Colonic mucosa (tissue), 4 donors: ENCODE measurements at regions of chr15 and their contacts with region 1.

Region 1: DNA sequence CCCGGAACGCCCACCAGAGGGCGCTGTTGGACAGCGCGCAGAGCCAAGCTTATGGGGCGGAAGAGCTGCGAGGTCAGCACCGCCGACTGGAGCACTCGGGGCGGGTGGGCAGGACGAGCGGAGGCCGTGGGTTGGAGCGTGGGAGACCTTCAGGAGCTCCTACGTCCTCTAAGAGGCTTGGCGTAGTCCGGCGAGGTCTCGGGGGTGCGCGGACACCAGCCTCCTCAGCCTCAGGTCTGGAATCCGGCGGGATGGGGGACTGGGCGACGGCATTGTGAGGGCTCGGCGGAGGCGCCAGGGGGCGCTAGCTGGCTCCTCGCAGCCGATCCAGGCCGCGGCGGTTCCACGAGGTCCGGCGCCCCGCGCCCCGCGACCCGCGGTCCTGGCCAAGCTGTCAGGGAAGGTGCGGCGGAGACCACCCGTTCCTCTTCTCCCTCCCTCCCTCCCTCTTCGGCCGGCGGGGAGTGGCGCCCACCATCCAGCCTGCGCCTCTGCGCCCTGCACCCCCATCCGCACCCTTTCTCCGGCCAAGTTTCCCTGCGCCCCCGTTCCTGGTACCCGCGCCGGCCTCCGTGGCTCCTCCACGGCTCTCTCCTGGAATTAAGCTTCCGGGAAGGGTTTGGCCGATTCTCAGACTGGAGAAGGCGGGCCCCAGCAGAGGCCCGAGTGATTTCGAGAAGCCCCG is 24.3 kb upstream of the POLG start:
- DNase-seq: peak; percentile 71
- H3K4me3 ChIP-seq: peak overlapping the region; percentile 29
- H3K27ac ChIP-seq: no peak overlapping the region
- H3K4me1 ChIP-seq: peaks cover 9% of the 10 kb centered on the region
- H3K27me3 ChIP-seq: peaks cover 56% of the 10 kb centered on the region
- CTCF ChIP-seq: peak; percentile 94

Region 2: DNA sequence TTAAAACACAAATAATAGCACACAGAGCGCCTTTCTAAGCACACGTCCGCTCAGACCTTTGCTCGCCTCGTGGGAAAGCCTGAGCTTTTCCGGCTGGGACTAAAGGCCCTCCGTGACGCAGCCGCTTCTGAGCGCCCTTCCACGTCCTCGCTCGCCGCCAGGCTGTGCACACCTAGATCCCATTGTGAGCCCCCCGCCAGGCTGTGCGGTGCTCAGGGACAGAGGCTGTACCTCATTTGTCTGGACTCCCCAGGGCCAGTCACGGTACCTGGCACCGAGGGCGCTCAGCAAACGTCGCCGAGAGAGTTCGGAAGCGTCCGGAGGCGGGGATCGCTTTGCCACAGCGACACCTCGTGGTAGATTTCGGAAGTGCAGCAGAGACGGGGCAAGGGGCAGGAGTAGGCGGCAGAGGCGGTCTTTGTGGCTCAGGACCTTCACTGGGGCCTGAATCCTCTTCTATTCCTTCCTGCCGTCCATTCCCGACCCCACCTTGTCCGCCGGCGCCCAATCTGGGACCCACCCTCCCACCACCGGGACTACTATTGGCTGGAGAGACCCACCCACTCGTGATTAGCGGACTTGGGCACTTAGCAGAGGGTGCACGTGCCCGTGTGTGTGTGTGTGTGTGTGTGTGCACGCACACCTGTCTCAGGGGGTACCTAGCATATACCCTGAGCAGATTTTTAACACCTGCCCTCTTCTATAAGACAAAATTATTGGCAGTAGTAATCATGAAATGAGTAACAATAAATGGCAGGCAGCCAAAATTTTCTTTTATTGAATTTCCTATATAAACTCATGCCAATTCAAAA is 71.8 kb after region 1 on chr15:
- intact Hi-C with region 1: loop called (anchors 2 kb)
- DNase-seq: peak; percentile 94
- H3K4me3 ChIP-seq: peak overlapping the region; percentile 39
- H3K27ac ChIP-seq: no peak overlapping the region
- H3K4me1 ChIP-seq: peaks cover 3% of the 10 kb centered on the region
- H3K27me3 ChIP-seq: no peaks in the 10 kb centered on the region
- CTCF ChIP-seq: peak; percentile 97

Region 3: DNA sequence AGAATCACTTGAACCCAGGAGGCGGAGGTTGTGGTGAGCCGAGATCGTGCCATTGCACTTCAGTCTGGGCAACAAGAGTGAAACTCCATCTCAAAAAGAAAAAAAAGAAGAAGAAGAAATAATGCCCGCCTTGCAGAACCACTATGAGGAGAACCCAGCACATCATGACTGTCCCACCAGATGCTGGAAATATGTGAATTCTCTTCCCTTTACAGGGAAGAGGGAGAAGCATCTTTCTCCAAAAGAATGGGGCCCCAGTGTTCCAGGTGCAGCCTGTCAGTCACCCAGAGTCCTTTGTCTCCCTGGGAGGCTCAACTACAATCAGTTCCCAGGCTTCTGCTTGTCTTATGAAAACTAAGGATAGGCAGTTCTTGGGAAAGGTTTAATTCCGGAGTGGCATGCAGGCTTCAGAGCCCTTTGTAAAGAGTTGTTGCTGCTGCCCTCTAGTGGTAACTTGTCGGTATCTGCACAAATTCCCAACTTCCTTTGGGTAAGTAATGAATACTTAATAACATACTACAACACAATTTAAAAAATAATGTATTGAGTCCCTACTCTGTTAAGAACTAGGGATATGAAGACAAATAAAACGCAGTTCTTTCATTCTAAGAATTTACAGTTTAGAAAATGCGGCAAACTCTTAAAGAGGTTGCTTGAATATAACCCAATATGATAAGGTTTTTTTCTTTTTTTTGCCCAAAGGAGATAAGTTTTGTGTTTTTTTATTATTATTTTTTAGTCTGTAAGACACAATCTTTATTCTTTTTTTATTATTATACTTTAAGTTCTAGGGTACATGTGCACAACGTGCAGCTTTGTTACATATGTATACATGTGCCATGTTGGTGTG is 197.7 kb after region 1 on chr15:
- intact Hi-C with region 1: loop called (anchors 10 kb)
- DNase-seq: peak; percentile 63
- H3K4me3 ChIP-seq: no peak overlapping the region
- H3K27ac ChIP-seq: no peak overlapping the region
- H3K4me1 ChIP-seq: no peaks in the 10 kb centered on the region
- H3K27me3 ChIP-seq: peaks cover 5% of the 10 kb centered on the region
- CTCF ChIP-seq: peak; percentile 82